Ascending aorta (tissue), 2 donors: ENCODE measurements at regions of chr6 and their contacts with region 1.

Region 1: GRCh38 chr6:34425498-34426410 is at the start of gene RPS10:
- DNase-seq: peak; percentile 41 to 94
- H3K4me3 ChIP-seq: peak within 1 kb of the TSS; percentile 70 to 88
- H3K27ac ChIP-seq: peak within 1 kb of the TSS; percentile 83 to 85
- H3K4me1 ChIP-seq: peaks cover 0 to 9% of the 10 kb centered on the region in 2 donors
- H3K27me3 ChIP-seq: no peaks in the 10 kb centered on the region
- CTCF ChIP-seq: no peak
- total RNA-seq, gene RPS10: 1,703 TPM

Region 2: DNA sequence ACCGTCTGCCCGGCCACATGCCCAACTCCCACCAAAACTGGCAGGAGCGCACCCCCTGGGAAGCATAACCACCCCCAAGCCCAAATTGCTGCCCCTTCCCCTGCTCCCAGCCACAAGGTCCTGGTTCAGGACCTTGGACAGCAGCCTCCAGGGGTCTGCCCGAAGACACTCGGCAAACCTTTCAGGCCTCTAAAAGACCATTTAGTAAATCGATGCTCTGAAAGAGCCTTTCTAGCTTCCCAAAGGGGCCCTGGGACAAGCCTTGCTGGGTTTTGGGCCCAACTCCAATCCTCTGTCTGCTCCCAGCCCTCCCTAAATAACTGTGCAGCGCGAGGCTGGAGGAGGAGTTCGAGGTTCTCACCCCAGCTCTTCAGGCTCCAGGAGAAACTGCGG is 310.4 kb before region 1 on chr6:
- intact Hi-C with region 1: no loop called
- DNase-seq: no peak
- H3K4me3 ChIP-seq: no peak overlapping the region
- H3K27ac ChIP-seq: no peak overlapping the region
- H3K4me1 ChIP-seq: no peaks in the 10 kb centered on the region
- H3K27me3 ChIP-seq: no peaks in the 10 kb centered on the region
- CTCF ChIP-seq: no peak

Region 3: DNA sequence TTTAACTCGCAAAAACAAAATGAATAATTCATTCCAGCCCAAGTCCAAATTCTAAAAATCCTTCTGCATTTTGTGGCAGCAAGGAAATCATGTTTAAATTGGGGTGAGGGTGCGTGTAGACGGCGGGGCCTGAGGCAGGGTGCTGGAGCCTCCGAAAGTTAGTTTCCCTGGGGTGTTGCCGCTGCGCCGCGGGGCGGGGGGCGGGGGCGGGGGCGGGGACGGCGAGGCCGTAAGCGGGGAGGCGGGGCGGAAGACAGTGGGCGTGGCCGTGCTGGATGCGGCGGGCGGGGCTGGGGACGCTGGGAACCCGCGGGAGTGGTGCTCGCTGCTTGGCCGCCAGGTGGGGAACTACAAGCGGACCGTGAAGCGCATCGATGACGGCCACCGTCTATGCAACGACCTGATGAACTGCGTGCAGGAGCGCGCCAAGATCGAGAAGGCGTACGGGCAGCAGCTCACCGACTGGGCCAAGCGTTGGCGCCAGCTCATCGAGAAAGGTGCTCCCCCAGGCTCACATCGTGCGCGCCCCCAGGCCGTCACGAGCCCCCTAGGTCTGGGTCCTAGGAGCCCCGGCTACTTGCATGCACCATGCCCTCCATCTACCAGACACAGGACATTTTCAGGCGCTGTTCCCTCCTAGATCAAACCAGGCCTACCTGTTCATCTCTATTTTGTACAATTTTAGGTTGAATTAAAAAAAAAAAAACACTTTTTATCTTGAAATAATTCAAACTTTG is 101.4 kb after region 1 on chr6:
- intact Hi-C with region 1: loop called (anchors 2 kb)
- DNase-seq: peak; percentile 57 to 96
- H3K4me3 ChIP-seq: peak overlapping the region; percentile 37 to 40
- H3K27ac ChIP-seq: peak overlapping the region; percentile 41 to 52
- H3K4me1 ChIP-seq: peaks cover 0 to 8% of the 10 kb centered on the region in 2 donors
- H3K27me3 ChIP-seq: no peaks in the 10 kb centered on the region
- CTCF ChIP-seq: peak; percentile 66 to 85 (median 75)